Natural killer cell (primary cell): ENCODE measurements at regions of chr22 and their contacts with region 1.

Region 1: GRCh38 chr22:40856513-40857308 is at the starts of genes ST13 and XPNPEP3:
- DNase-seq: peak; percentile 96 to 99
- ATAC-seq: peak; percentile 85 to 95 (median 88)
- H3K4me3 ChIP-seq: peak within 1 kb of the TSS; percentile 78
- H3K4me3 Mint-ChIP-seq: peak within 1 kb of the TSS; percentile 98
- H3K27ac ChIP-seq: peak within 1 kb of the TSS; percentile 93
- H3K27ac Mint-ChIP-seq: peak within 1 kb of the TSS; percentile 99 to 100
- H3K4me1 ChIP-seq: peaks cover 14% of the 10 kb centered on the region
- H3K4me1 Mint-ChIP-seq: peaks cover 23 to 31% of the 10 kb centered on the region in 2 donors
- H3K27me3 ChIP-seq: no peaks in the 10 kb centered on the region
- H3K27me3 Mint-ChIP-seq: no peaks in the 10 kb centered on the region
- CTCF ChIP-seq: no peak
- total RNA-seq, gene ST13: 72.2 to 81.9 (median 77.5) TPM
- total RNA-seq, gene XPNPEP3: 14.8 to 17.8 (median 15.1) TPM

Region 2: GRCh38 chr22:40605676-40606250 is 250.9 kb before region 1 on chr22:
- intact Hi-C with region 1: no loop called
- DNase-seq: no peak
- ATAC-seq: no peak
- H3K4me3 ChIP-seq: no peak overlapping the region
- H3K4me3 Mint-ChIP-seq: no peak overlapping the region
- H3K27ac ChIP-seq: no peak overlapping the region
- H3K27ac Mint-ChIP-seq: peak overlapping the region; percentile 26 to 52
- H3K4me1 ChIP-seq: no peaks in the 10 kb centered on the region
- H3K4me1 Mint-ChIP-seq: peaks cover 55 to 56% of the 10 kb centered on the region in 2 donors
- H3K27me3 ChIP-seq: no peaks in the 10 kb centered on the region
- H3K27me3 Mint-ChIP-seq: no peaks in the 10 kb centered on the region
- CTCF ChIP-seq: no peak

Region 3: DNA sequence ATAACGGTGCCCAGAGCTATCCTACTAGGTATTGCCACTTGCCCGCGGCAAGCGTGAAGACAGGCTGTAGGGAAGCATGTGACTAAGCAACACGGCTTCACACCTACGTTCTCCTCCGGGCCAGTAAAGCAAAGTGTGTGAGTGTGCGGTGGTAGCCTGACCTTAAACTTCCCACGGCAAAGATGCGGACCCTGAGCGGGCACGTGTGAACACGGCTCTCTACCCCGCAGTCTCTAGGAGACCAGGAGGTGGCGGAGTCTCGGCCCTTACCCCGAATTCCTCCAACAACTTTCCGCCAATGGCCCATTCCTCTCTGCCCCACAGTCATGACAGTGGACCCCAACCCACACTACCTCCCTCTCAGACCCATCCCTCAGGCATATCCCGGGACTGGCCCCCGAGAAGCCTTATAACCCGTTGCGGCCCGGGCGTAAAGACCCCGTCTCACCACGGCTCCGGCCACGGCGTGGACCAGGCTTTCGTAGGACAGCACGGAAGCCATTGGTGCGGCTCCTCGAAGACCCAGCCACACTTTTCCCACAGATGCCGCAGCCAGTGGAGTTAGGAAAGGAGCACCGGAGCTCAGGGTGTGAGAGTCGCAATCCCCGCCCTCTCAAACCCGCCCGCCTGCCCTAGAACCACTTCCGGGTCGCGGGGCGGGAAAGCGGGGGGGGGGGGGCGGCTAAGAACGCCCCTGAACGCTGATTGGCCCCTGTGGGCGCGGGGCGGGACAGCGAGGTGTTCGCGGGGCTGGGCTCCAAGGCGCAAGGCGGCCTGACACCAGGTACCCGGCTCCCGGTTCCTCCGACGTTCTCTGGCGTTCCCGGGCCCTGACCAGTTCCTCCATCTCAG is 37.7 kb before region 1 on chr22 and contains the start of gene SLC25A17:
- intact Hi-C with region 1: loop called (anchors 2 kb)
- DNase-seq: peak; percentile 81 to 93
- ATAC-seq: peak; percentile 81 to 93 (median 85)
- H3K4me3 ChIP-seq: peak within 1 kb of the TSS; percentile 99
- H3K4me3 Mint-ChIP-seq: peak within 1 kb of the TSS; percentile 78
- H3K27ac ChIP-seq: peak within 1 kb of the TSS; percentile 89
- H3K27ac Mint-ChIP-seq: peak within 1 kb of the TSS; percentile 78 to 92
- H3K4me1 ChIP-seq: peaks cover 21% of the 10 kb centered on the region
- H3K4me1 Mint-ChIP-seq: peaks cover 32 to 35% of the 10 kb centered on the region in 2 donors
- H3K27me3 ChIP-seq: no peaks in the 10 kb centered on the region
- H3K27me3 Mint-ChIP-seq: no peaks in the 10 kb centered on the region
- CTCF ChIP-seq: peak; percentile 29
- total RNA-seq, gene SLC25A17: 9.2 to 13.4 (median 10.0) TPM

Region 4: GRCh38 chr22:40876907-40877306 is 20.2 kb after region 1 on chr22:
- intact Hi-C with region 1: no loop called
- DNase-seq: no peak
- ATAC-seq: no peak
- H3K4me3 ChIP-seq: no peak overlapping the region
- H3K4me3 Mint-ChIP-seq: no peak overlapping the region
- H3K27ac ChIP-seq: no peak overlapping the region
- H3K27ac Mint-ChIP-seq: no peak overlapping the region
- H3K4me1 ChIP-seq: no peaks in the 10 kb centered on the region
- H3K4me1 Mint-ChIP-seq: no peaks in the 10 kb centered on the region
- H3K27me3 ChIP-seq: no peaks in the 10 kb centered on the region
- H3K27me3 Mint-ChIP-seq: no peaks in the 10 kb centered on the region
- CTCF ChIP-seq: no peak

Region 5: DNA sequence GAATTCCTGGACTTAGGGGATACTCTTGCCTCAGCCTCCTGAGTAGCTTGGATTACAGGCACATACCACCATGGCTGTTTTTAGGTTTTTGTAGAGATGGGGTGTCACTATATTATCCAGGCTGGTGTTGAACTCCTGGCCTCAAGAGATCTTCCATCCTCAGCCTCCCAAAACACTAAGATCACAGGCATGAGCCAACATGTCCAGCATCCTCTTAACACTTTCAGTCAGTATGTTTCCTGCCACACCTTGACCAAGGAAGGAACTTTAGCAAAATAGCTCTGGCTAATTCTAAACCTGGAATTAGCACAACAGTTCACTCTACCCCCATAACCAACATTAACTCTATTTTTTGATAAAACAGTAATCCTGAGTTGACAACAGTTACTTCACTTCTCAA is 32.4 kb after region 1 on chr22:
- intact Hi-C with region 1: no loop called
- DNase-seq: no peak
- ATAC-seq: no peak
- H3K4me3 ChIP-seq: no peak overlapping the region
- H3K4me3 Mint-ChIP-seq: no peak overlapping the region
- H3K27ac ChIP-seq: no peak overlapping the region
- H3K27ac Mint-ChIP-seq: no peak overlapping the region
- H3K4me1 ChIP-seq: no peaks in the 10 kb centered on the region
- H3K4me1 Mint-ChIP-seq: no peaks in the 10 kb centered on the region
- H3K27me3 ChIP-seq: no peaks in the 10 kb centered on the region
- H3K27me3 Mint-ChIP-seq: no peaks in the 10 kb centered on the region
- CTCF ChIP-seq: no peak

Region 6: DNA sequence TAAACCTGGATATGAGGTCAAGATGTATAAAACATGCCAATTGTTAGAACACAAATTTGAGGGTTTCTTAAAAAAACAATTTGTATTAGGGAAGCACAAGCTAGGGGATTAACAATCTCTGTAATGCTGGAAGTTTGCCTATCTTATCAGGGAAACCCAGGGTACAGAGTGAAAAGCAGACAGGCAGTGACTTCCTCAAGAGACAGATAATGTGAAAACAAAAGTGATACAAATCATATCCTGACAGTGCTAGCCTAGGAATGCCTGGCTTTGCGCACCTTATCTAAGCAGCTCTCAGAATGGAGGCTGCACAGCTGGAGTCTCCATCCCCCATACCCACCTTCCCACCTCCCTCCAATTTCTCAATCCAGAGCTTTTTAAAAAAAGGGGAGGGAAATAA is 71.9 kb after region 1 on chr22:
- intact Hi-C with region 1: no loop called
- DNase-seq: no peak
- ATAC-seq: no peak
- H3K4me3 ChIP-seq: no peak overlapping the region
- H3K4me3 Mint-ChIP-seq: no peak overlapping the region
- H3K27ac ChIP-seq: no peak overlapping the region
- H3K27ac Mint-ChIP-seq: no peak overlapping the region
- H3K4me1 ChIP-seq: no peaks in the 10 kb centered on the region
- H3K4me1 Mint-ChIP-seq: no peaks in the 10 kb centered on the region
- H3K27me3 ChIP-seq: no peaks in the 10 kb centered on the region
- H3K27me3 Mint-ChIP-seq: no peaks in the 10 kb centered on the region
- CTCF ChIP-seq: no peak

Region 7: GRCh38 chr22:40950962-40951794 is 94.5 kb after region 1 on chr22 and contains the start of gene RBX1:
- intact Hi-C with region 1: loop called (anchors 1 kb)
- DNase-seq: peak; percentile 98 to 100
- ATAC-seq: peak; percentile 81 to 94 (median 81)
- H3K4me3 ChIP-seq: peak within 1 kb of the TSS; percentile 98
- H3K4me3 Mint-ChIP-seq: peak within 1 kb of the TSS; percentile 99
- H3K27ac ChIP-seq: peak within 1 kb of the TSS; percentile 99
- H3K27ac Mint-ChIP-seq: peak within 1 kb of the TSS; percentile 98 to 100
- H3K4me1 ChIP-seq: peaks cover 23% of the 10 kb centered on the region
- H3K4me1 Mint-ChIP-seq: peaks cover 22 to 31% of the 10 kb centered on the region in 2 donors
- H3K27me3 ChIP-seq: no peaks in the 10 kb centered on the region
- H3K27me3 Mint-ChIP-seq: no peaks in the 10 kb centered on the region
- CTCF ChIP-seq: no peak
- total RNA-seq, gene RBX1: 27.1 to 34.3 (median 28.5) TPM